Natural killer cell (primary cell): ENCODE measurements at regions of chr6 and their contacts with region 1.

Region 1: DNA sequence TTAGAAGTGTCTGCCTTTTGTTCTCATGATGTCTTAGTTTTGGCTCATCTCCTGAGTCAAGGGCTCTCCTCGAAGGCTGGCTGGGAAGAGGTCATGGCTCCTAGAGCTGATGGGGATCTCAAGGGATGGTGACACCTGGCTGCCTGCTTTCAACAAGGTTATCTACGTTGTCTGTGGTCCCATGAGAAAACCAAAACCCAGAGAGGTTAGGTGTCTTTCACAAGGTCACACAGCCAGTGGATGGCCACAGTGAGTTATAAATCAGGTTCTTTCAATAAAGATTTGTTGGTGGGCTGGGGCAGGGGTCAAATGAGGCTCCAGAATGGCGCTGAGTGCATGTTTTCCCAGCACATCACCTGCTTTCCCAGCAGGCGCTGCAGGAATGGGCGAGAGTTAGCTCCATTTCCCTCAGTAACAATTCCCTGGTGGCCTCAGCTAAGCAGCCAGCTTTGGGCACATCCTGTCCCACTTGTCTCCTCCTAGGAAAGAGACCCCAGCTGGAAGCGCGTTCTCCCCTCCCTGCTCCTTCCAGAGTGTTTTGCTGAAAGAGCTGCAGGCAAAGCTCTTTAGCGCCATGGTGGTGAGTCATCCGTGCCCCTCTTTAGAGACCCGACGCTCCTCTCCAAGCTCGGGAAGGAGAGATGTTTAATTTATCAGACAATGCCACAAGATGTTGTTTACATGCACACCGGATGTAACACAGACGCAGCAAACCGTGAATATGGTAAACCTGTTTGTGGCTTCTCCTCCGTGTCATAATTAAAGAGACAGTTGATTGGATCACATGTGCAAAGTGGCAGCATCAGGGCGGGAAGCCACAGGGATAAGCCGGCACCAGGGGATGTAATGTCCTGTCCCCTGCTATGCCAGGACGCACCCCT is 109.7 kb downstream of the LRFN2 start:
- DNase-seq: peak; percentile 65 to 78
- ATAC-seq: peak; percentile 82 to 90 (median 84)
- H3K4me3 ChIP-seq: no peak overlapping the region
- H3K4me3 Mint-ChIP-seq: peak overlapping the region; percentile 75
- H3K27ac ChIP-seq: peak overlapping the region; percentile 67
- H3K27ac Mint-ChIP-seq: peak overlapping the region; percentile 87 to 89
- H3K4me1 ChIP-seq: peaks cover 26% of the 10 kb centered on the region
- H3K4me1 Mint-ChIP-seq: peaks cover 37 to 54% of the 10 kb centered on the region in 2 donors
- H3K27me3 ChIP-seq: no peaks in the 10 kb centered on the region
- H3K27me3 Mint-ChIP-seq: no peaks in the 10 kb centered on the region
- CTCF ChIP-seq: no peak

Region 2: DNA sequence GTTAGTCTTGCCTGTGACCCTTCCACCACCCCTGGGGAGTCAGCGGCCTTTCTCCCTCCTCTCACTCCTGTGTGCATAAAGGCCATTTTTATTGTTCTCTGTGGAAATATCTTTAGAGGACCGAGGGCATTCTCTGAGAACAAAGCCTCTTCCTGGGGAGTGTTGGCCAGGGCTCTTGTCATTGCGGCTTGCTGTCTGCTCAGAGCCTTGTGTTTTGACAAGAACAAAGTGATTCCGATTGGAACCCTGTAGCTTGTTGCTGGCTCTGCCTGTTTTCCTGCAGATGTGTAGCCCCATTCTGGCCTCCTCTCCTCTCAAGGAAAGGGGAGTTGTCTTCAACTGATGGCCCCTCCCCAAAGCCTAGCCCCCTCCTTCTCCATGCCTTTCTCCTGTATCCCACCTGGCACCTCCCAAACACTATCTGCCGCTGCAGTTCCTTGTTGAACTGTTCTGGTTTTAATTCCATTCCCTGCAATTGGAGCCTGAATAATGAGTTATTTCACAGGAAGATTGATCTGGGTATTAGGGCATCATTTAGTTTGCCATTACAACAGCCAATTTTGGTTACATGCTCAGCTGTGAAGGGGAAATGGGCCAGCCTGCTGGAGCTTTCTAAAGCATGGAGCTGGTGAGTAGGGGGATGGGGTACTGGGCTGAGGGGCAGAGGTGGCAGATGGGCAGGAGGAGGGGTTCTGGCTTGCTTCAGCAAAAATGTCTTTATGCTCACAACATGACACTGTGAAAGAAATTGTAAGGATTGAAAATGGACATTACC is 142.8 kb before region 1 on chr6:
- intact Hi-C with region 1: loop called (anchors 5 kb)
- DNase-seq: no peak
- ATAC-seq: no peak
- H3K4me3 ChIP-seq: no peak overlapping the region
- H3K4me3 Mint-ChIP-seq: no peak overlapping the region
- H3K27ac ChIP-seq: no peak overlapping the region
- H3K27ac Mint-ChIP-seq: no peak overlapping the region
- H3K4me1 ChIP-seq: no peaks in the 10 kb centered on the region
- H3K4me1 Mint-ChIP-seq: peaks cover 5 to 22% of the 10 kb centered on the region in 2 donors
- H3K27me3 ChIP-seq: no peaks in the 10 kb centered on the region
- H3K27me3 Mint-ChIP-seq: peaks cover 24 to 32% of the 10 kb centered on the region in 2 donors
- CTCF ChIP-seq: no peak

Region 3: GRCh38 chr6:40371621-40372020 is 105.9 kb before region 1 on chr6:
- intact Hi-C with region 1: loop called (anchors 1 kb)
- DNase-seq: no peak
- ATAC-seq: peak; percentile 58 to 72 (median 69)
- H3K4me3 ChIP-seq: no peak overlapping the region
- H3K4me3 Mint-ChIP-seq: peak overlapping the region; percentile 78
- H3K27ac ChIP-seq: peak overlapping the region; percentile 30
- H3K27ac Mint-ChIP-seq: peak overlapping the region; percentile 82 to 90
- H3K4me1 ChIP-seq: peaks cover 5% of the 10 kb centered on the region
- H3K4me1 Mint-ChIP-seq: peaks cover 60 to 66% of the 10 kb centered on the region in 2 donors
- H3K27me3 ChIP-seq: no peaks in the 10 kb centered on the region
- H3K27me3 Mint-ChIP-seq: no peaks in the 10 kb centered on the region
- CTCF ChIP-seq: no peak

Region 4: GRCh38 chr6:40409716-40410397 is 67.6 kb before region 1 on chr6:
- intact Hi-C with region 1: loop called (anchors 2 kb)
- DNase-seq: no peak
- ATAC-seq: peak in 1 of 3 donors; percentile 17
- H3K4me3 ChIP-seq: no peak overlapping the region
- H3K4me3 Mint-ChIP-seq: peak overlapping the region; percentile 61
- H3K27ac ChIP-seq: peak overlapping the region; percentile 61
- H3K27ac Mint-ChIP-seq: peak overlapping the region; percentile 90 to 95
- H3K4me1 ChIP-seq: peaks cover 33% of the 10 kb centered on the region
- H3K4me1 Mint-ChIP-seq: peaks cover 64 to 82% of the 10 kb centered on the region in 2 donors
- H3K27me3 ChIP-seq: no peaks in the 10 kb centered on the region
- H3K27me3 Mint-ChIP-seq: no peaks in the 10 kb centered on the region
- CTCF ChIP-seq: no peak

Region 5: GRCh38 chr6:40436685-40437604 is 40.5 kb before region 1 on chr6:
- intact Hi-C with region 1: loop called (anchors 1 kb)
- DNase-seq: peak; percentile 25 to 51
- ATAC-seq: peak; percentile 83 to 94 (median 87)
- H3K4me3 ChIP-seq: no peak overlapping the region
- H3K4me3 Mint-ChIP-seq: peak overlapping the region; percentile 0
- H3K27ac ChIP-seq: peak overlapping the region; percentile 71
- H3K27ac Mint-ChIP-seq: peak overlapping the region; percentile 82 to 90
- H3K4me1 ChIP-seq: peaks cover 27% of the 10 kb centered on the region
- H3K4me1 Mint-ChIP-seq: peaks cover 42 to 59% of the 10 kb centered on the region in 2 donors
- H3K27me3 ChIP-seq: no peaks in the 10 kb centered on the region
- H3K27me3 Mint-ChIP-seq: no peaks in the 10 kb centered on the region
- CTCF ChIP-seq: no peak

Region 6: GRCh38 chr6:40456390-40457013 is 21.0 kb before region 1 on chr6:
- intact Hi-C with region 1: loop called (anchors 1 kb)
- DNase-seq: no peak
- ATAC-seq: peak; percentile 28 to 68 (median 65)
- H3K4me3 ChIP-seq: no peak overlapping the region
- H3K4me3 Mint-ChIP-seq: peak overlapping the region; percentile 51
- H3K27ac ChIP-seq: peak overlapping the region; percentile 81
- H3K27ac Mint-ChIP-seq: peak overlapping the region; percentile 45 to 97
- H3K4me1 ChIP-seq: peaks cover 8% of the 10 kb centered on the region
- H3K4me1 Mint-ChIP-seq: peaks cover 36 to 41% of the 10 kb centered on the region in 2 donors
- H3K27me3 ChIP-seq: no peaks in the 10 kb centered on the region
- H3K27me3 Mint-ChIP-seq: no peaks in the 10 kb centered on the region
- CTCF ChIP-seq: no peak

Region 7: GRCh38 chr6:40587240-40588069 is 110.0 kb after region 1 on chr6 and contains the start of gene LRFN2:
- intact Hi-C with region 1: loop called (anchors 2 kb)
- DNase-seq: peak; percentile 77 to 82
- ATAC-seq: peak; percentile 87 to 88 (median 88)
- H3K4me3 ChIP-seq: peak within 1 kb of the TSS; percentile 47
- H3K4me3 Mint-ChIP-seq: peak within 1 kb of the TSS; percentile 94
- H3K27ac ChIP-seq: no peak within 1 kb of the TSS
- H3K27ac Mint-ChIP-seq: peak within 1 kb of the TSS; percentile 68 to 88
- H3K4me1 ChIP-seq: peaks cover 45% of the 10 kb centered on the region
- H3K4me1 Mint-ChIP-seq: peaks cover 0 to 54% of the 10 kb centered on the region in 2 donors
- H3K27me3 ChIP-seq: peaks cover 3% of the 10 kb centered on the region
- H3K27me3 Mint-ChIP-seq: no peaks in the 10 kb centered on the region
- CTCF ChIP-seq: peak; percentile 66
- total RNA-seq, gene LRFN2: 3.0 to 3.6 (median 3.5) TPM